Right ventricle myocardium superior (tissue), 1 donor: ENCODE measurements at regions of chr1 and their contacts with region 1.

Region 1: DNA sequence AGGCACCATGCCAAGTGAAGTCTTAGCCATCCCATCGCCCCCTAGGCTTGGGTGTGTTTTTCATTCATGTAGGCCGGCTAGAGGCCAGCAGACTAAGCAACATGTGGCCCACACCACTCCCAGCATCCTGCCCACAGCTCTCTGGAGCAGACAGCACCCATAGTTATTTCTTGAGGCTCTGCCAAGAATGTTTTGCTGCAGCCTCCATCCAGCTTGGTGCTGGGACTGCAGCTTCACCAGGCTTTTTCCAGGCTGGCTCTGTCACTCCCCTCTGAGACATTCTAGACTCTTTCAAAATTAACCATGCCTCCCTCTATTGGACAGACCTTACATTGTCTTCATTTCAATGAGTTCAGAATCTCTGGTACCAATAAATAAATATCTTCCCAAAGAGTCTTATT is 104.2 kb downstream of the DUSP10 start:
- DNase-seq: no peak
- ATAC-seq: peak; percentile 81

Region 2: GRCh38 chr1:221753828-221754188 is 116.2 kb after region 1 on chr1:
- intact Hi-C with region 1: loop called (anchors 10 kb)
- DNase-seq: no peak
- ATAC-seq: no peak